ENCODE measurements at regions of chr9 and their contacts with region 1.

Region 1: GRCh38 chr9:6353851-6354686 is 25.9 kb downstream of the TPD52L3 start:
- DNase-seq: peak in 1 of 2 experiments; percentile 42
- H3K4me3 ChIP-seq: no peak overlapping the region
- H3K4me3 Mint-ChIP-seq: no peak overlapping the region
- H3K27ac Mint-ChIP-seq: no peak overlapping the region
- H3K4me1 ChIP-seq: peaks cover 12% of the 10 kb centered on the region
- H3K4me1 Mint-ChIP-seq: peaks cover 20% of the 10 kb centered on the region
- H3K27me3 ChIP-seq: no peaks in the 10 kb centered on the region
- H3K27me3 Mint-ChIP-seq: no peaks in the 10 kb centered on the region
- CTCF ChIP-seq: peak; percentile 45 to 62

Region 2: GRCh38 chr9:6460189-6460768 is 106.2 kb after region 1 on chr9:
- CTCF ChIA-PET with region 1: no interaction called
- POLR2A ChIA-PET with region 1: no interaction called
- intact Hi-C with region 1: no loop called
- DNase-seq: no peak
- H3K4me3 ChIP-seq: no peak overlapping the region
- H3K4me3 Mint-ChIP-seq: no peak overlapping the region
- H3K27ac Mint-ChIP-seq: no peak overlapping the region
- H3K4me1 ChIP-seq: no peaks in the 10 kb centered on the region
- H3K4me1 Mint-ChIP-seq: no peaks in the 10 kb centered on the region
- H3K27me3 ChIP-seq: no peaks in the 10 kb centered on the region
- H3K27me3 Mint-ChIP-seq: no peaks in the 10 kb centered on the region
- CTCF ChIP-seq: no peak

Region 3: DNA sequence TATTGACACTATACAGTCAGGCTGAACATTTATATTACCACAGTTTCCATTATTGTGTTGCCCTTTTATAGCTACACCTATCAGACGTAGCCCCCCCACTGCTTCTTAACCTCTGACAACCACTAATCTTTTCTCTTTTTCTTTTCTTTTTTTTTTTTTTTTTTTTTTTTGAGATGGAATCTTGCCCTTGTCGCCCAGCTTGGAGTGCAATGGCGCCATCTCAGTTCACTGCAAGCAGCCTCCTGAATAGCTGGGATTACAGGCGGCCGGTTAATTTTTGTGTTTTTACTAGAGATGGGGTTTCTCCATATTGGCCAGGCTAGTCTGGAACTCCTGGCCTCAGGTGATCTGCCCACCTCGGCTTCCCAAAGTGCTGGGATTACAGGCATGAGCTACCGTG is 134.3 kb after region 1 on chr9:
- CTCF ChIA-PET with region 1: no interaction called
- POLR2A ChIA-PET with region 1: no interaction called
- intact Hi-C with region 1: loop called (anchors 1 kb)
- DNase-seq: peak in 1 of 2 experiments; percentile 15
- H3K4me3 ChIP-seq: no peak overlapping the region
- H3K4me3 Mint-ChIP-seq: no peak overlapping the region
- H3K27ac Mint-ChIP-seq: no peak overlapping the region
- H3K4me1 ChIP-seq: no peaks in the 10 kb centered on the region
- H3K4me1 Mint-ChIP-seq: peaks cover 9% of the 10 kb centered on the region
- H3K27me3 ChIP-seq: no peaks in the 10 kb centered on the region
- H3K27me3 Mint-ChIP-seq: no peaks in the 10 kb centered on the region
- CTCF ChIP-seq: no peak

Region 4: DNA sequence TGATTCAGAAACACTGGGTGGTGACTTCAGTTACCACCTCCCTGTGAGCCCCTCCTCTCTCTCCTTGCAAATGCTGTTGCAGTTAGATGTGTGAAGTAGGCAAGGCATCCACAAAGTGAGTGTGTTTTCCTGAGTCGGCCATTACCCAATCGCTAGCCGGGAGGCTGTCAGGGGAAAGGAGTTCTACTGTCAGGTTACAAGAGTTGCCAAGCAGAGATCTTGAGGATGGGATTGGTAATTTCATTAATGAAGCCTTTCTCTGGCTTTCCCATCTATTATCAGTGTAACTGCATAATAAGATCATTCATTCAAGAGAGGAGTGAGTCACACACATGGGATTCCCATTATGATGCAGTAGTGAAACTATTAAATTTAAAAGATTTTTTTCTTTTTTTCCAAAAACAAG is 184.6 kb after region 1 on chr9:
- CTCF ChIA-PET with region 1: no interaction called
- POLR2A ChIA-PET with region 1: no interaction called
- intact Hi-C with region 1: loop called (anchors 2 kb)
- DNase-seq: no peak
- H3K4me3 ChIP-seq: no peak overlapping the region
- H3K4me3 Mint-ChIP-seq: no peak overlapping the region
- H3K27ac Mint-ChIP-seq: no peak overlapping the region
- H3K4me1 ChIP-seq: no peaks in the 10 kb centered on the region
- H3K4me1 Mint-ChIP-seq: no peaks in the 10 kb centered on the region
- H3K27me3 ChIP-seq: no peaks in the 10 kb centered on the region
- H3K27me3 Mint-ChIP-seq: no peaks in the 10 kb centered on the region
- CTCF ChIP-seq: no peak

Region 5: GRCh38 chr9:6566409-6567139 is 212.5 kb after region 1 on chr9:
- CTCF ChIA-PET with region 1: interaction called, 3 read pairs
- POLR2A ChIA-PET with region 1: no interaction called
- intact Hi-C with region 1: loop called (anchors 1 kb)
- DNase-seq: no peak
- H3K4me3 ChIP-seq: no peak overlapping the region
- H3K4me3 Mint-ChIP-seq: no peak overlapping the region
- H3K27ac Mint-ChIP-seq: no peak overlapping the region
- H3K4me1 ChIP-seq: no peaks in the 10 kb centered on the region
- H3K4me1 Mint-ChIP-seq: no peaks in the 10 kb centered on the region
- H3K27me3 ChIP-seq: no peaks in the 10 kb centered on the region
- H3K27me3 Mint-ChIP-seq: no peaks in the 10 kb centered on the region
- CTCF ChIP-seq: no peak

Region 6: DNA sequence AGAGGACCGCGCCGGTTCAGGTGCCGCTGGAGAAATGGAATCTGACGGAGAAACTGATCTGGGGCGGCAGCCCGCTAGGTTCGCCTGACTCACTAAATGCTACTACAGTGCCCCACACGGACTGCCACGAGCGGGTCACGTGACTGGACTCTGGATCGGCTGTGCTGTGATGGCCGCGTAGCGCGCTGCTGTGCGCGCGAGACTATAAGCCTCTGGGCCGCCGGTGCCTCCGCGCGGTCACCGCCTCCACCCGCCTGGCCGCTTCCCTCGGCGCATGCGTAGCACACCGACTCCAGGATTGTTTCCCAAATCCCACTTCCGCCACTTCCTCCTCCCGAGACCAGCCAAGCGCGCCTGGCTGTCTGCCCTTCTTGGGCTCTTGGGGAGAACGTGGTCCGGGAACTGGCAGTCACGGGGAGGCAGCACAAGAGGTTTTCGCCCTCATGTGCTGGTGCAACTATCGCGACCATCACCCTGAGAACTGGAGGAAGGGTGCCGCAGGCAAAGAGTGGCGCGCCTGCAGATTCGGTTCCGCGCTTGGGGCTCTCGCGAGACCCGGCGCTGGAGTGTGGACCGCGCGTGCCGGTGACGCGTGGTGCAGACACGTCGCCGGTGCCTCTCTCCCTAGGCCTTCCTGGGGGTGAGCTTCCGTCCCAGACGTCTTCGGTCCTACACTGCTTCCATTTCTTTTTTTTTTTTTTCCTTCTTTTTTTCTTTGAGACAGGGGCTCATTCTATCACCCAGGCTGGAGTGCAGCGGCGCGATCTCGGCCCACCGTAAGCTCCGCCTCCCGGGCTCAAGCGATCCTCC is 327.3 kb after region 1 on chr9:
- CTCF ChIA-PET with region 1: no interaction called
- POLR2A ChIA-PET with region 1: no interaction called
- intact Hi-C with region 1: loop called (anchors 10 kb)
- DNase-seq: peak; percentile 96 to 97
- H3K4me3 ChIP-seq: peak overlapping the region; percentile 62
- H3K4me3 Mint-ChIP-seq: peak overlapping the region; percentile 77
- H3K27ac Mint-ChIP-seq: peak overlapping the region; percentile 99
- H3K4me1 ChIP-seq: peaks cover 15% of the 10 kb centered on the region
- H3K4me1 Mint-ChIP-seq: peaks cover 10% of the 10 kb centered on the region
- H3K27me3 ChIP-seq: no peaks in the 10 kb centered on the region
- H3K27me3 Mint-ChIP-seq: no peaks in the 10 kb centered on the region
- CTCF ChIP-seq: no peak

Region 7: GRCh38 chr9:6739218-6739617 is 385.1 kb after region 1 on chr9:
- CTCF ChIA-PET with region 1: no interaction called
- POLR2A ChIA-PET with region 1: no interaction called
- intact Hi-C with region 1: loop called (anchors 10 kb)
- DNase-seq: peak in 1 of 2 experiments; percentile 13
- H3K4me3 ChIP-seq: no peak overlapping the region
- H3K4me3 Mint-ChIP-seq: no peak overlapping the region
- H3K27ac Mint-ChIP-seq: no peak overlapping the region
- H3K4me1 ChIP-seq: no peaks in the 10 kb centered on the region
- H3K4me1 Mint-ChIP-seq: no peaks in the 10 kb centered on the region
- H3K27me3 ChIP-seq: no peaks in the 10 kb centered on the region
- H3K27me3 Mint-ChIP-seq: no peaks in the 10 kb centered on the region
- CTCF ChIP-seq: peak in 1 of 2 experiments; percentile 6